Natural killer cell (primary cell): ENCODE measurements at regions of chr6 and their contacts with region 1.

Region 1: GRCh38 chr6:87472525-87473418 is at the start of gene SLC35A1:
- DNase-seq: peak; percentile 82 to 88
- ATAC-seq: peak; percentile 91 to 98 (median 94)
- H3K4me3 ChIP-seq: peak within 1 kb of the TSS; percentile 88
- H3K4me3 Mint-ChIP-seq: peak within 1 kb of the TSS; percentile 98
- H3K27ac ChIP-seq: peak within 1 kb of the TSS; percentile 93
- H3K27ac Mint-ChIP-seq: peak within 1 kb of the TSS; percentile 95 to 99
- H3K4me1 ChIP-seq: peaks cover 8% of the 10 kb centered on the region
- H3K4me1 Mint-ChIP-seq: peaks cover 9 to 16% of the 10 kb centered on the region in 2 donors
- H3K27me3 ChIP-seq: peaks cover 3% of the 10 kb centered on the region
- H3K27me3 Mint-ChIP-seq: peaks cover 10% of the 10 kb centered on the region in 2 donors
- CTCF ChIP-seq: no peak
- total RNA-seq, gene SLC35A1: 10.9 to 14.8 (median 13.4) TPM

Region 2: GRCh38 chr6:87154993-87155841 is 317.6 kb before region 1 on chr6 and contains the start of gene ZNF292:
- intact Hi-C with region 1: loop called (anchors 2 kb)
- DNase-seq: peak; percentile 88 to 97
- ATAC-seq: peak; percentile 66 to 88 (median 80)
- H3K4me3 ChIP-seq: peak within 1 kb of the TSS; percentile 85
- H3K4me3 Mint-ChIP-seq: peak within 1 kb of the TSS; percentile 91
- H3K27ac ChIP-seq: peak within 1 kb of the TSS; percentile 96
- H3K27ac Mint-ChIP-seq: peak within 1 kb of the TSS; percentile 97 to 99
- H3K4me1 ChIP-seq: peaks cover 30% of the 10 kb centered on the region
- H3K4me1 Mint-ChIP-seq: peaks cover 52 to 53% of the 10 kb centered on the region in 2 donors
- H3K27me3 ChIP-seq: no peaks in the 10 kb centered on the region
- H3K27me3 Mint-ChIP-seq: no peaks in the 10 kb centered on the region
- CTCF ChIP-seq: no peak
- total RNA-seq, gene ZNF292: 78.7 to 90.4 (median 89.4) TPM

Region 3: GRCh38 chr6:87322304-87323212 is 150.2 kb before region 1 on chr6 and contains the start of gene SMIM8:
- intact Hi-C with region 1: loop called (anchors 1 kb)
- DNase-seq: peak; percentile 83 to 88
- ATAC-seq: peak; percentile 99 to 100 (median 100)
- H3K4me3 ChIP-seq: peak within 1 kb of the TSS; percentile 89
- H3K4me3 Mint-ChIP-seq: peak within 1 kb of the TSS; percentile 99
- H3K27ac ChIP-seq: peak within 1 kb of the TSS; percentile 49
- H3K27ac Mint-ChIP-seq: peak within 1 kb of the TSS; percentile 85 to 92
- H3K4me1 ChIP-seq: peaks cover 6% of the 10 kb centered on the region
- H3K4me1 Mint-ChIP-seq: peaks cover 13 to 23% of the 10 kb centered on the region in 2 donors
- H3K27me3 ChIP-seq: no peaks in the 10 kb centered on the region
- H3K27me3 Mint-ChIP-seq: peaks cover 8 to 9% of the 10 kb centered on the region in 2 donors
- CTCF ChIP-seq: peak; percentile 100
- total RNA-seq, gene SMIM8: 8.0 to 11.1 (median 9.5) TPM

Region 4: GRCh38 chr6:87393022-87393622 is 79.7 kb before region 1 on chr6:
- intact Hi-C with region 1: loop called (anchors 1 kb)
- DNase-seq: peak; percentile 20 to 83
- ATAC-seq: peak; percentile 94 to 100 (median 100)
- H3K4me3 ChIP-seq: no peak overlapping the region
- H3K4me3 Mint-ChIP-seq: no peak overlapping the region
- H3K27ac ChIP-seq: no peak overlapping the region
- H3K27ac Mint-ChIP-seq: peak overlapping the region in 1 of 2 donors; percentile 45
- H3K4me1 ChIP-seq: no peaks in the 10 kb centered on the region
- H3K4me1 Mint-ChIP-seq: peaks cover 5% of the 10 kb centered on the region in 2 donors
- H3K27me3 ChIP-seq: no peaks in the 10 kb centered on the region
- H3K27me3 Mint-ChIP-seq: no peaks in the 10 kb centered on the region
- CTCF ChIP-seq: peak; percentile 72

Region 5: GRCh38 chr6:87407901-87408720 is 64.7 kb before region 1 on chr6 and contains the start of gene CFAP206:
- intact Hi-C with region 1: loop called (anchors 5 kb)
- DNase-seq: peak; percentile 76 to 93
- ATAC-seq: peak; percentile 79 to 93 (median 83)
- H3K4me3 ChIP-seq: peak within 1 kb of the TSS; percentile 55
- H3K4me3 Mint-ChIP-seq: peak within 1 kb of the TSS; percentile 91
- H3K27ac ChIP-seq: peak within 1 kb of the TSS; percentile 48
- H3K27ac Mint-ChIP-seq: peak within 1 kb of the TSS; percentile 78
- H3K4me1 ChIP-seq: peaks cover 12% of the 10 kb centered on the region
- H3K4me1 Mint-ChIP-seq: peaks cover 6 to 16% of the 10 kb centered on the region in 2 donors
- H3K27me3 ChIP-seq: peaks cover 10% of the 10 kb centered on the region
- H3K27me3 Mint-ChIP-seq: peaks cover 9 to 32% of the 10 kb centered on the region in 2 donors
- CTCF ChIP-seq: no peak
- total RNA-seq, gene CFAP206: not detected

Region 6: GRCh38 chr6:87589693-87590549 is 117.1 kb after region 1 on chr6 and contains the starts of genes ORC3 and RARS2:
- intact Hi-C with region 1: loop called (anchors 2 kb)
- DNase-seq: peak; percentile 93 to 96
- ATAC-seq: peak; percentile 98 to 100 (median 99)
- H3K4me3 ChIP-seq: peak within 1 kb of the TSS; percentile 80
- H3K4me3 Mint-ChIP-seq: peak within 1 kb of the TSS; percentile 88
- H3K27ac ChIP-seq: peak within 1 kb of the TSS; percentile 73
- H3K27ac Mint-ChIP-seq: peak within 1 kb of the TSS; percentile 85 to 90
- H3K4me1 ChIP-seq: peaks cover 16% of the 10 kb centered on the region
- H3K4me1 Mint-ChIP-seq: peaks cover 50 to 51% of the 10 kb centered on the region in 2 donors
- H3K27me3 ChIP-seq: no peaks in the 10 kb centered on the region
- H3K27me3 Mint-ChIP-seq: no peaks in the 10 kb centered on the region
- CTCF ChIP-seq: no peak
- total RNA-seq, gene ORC3: 13.1 to 13.4 (median 13.3) TPM
- total RNA-seq, gene RARS2: 21.8 to 26.5 (median 24.2) TPM

Region 7: GRCh38 chr6:87701676-87702588 is 229.2 kb after region 1 on chr6 and contains the start of gene AKIRIN2:
- intact Hi-C with region 1: loop called (anchors 1 kb)
- DNase-seq: peak; percentile 97 to 99
- ATAC-seq: peak; percentile 78 to 92 (median 83)
- H3K4me3 ChIP-seq: peak within 1 kb of the TSS; percentile 87
- H3K4me3 Mint-ChIP-seq: peak within 1 kb of the TSS; percentile 99
- H3K27ac ChIP-seq: peak within 1 kb of the TSS; percentile 97
- H3K27ac Mint-ChIP-seq: peak within 1 kb of the TSS; percentile 94 to 98
- H3K4me1 ChIP-seq: no peaks in the 10 kb centered on the region
- H3K4me1 Mint-ChIP-seq: peaks cover 51 to 54% of the 10 kb centered on the region in 2 donors
- H3K27me3 ChIP-seq: no peaks in the 10 kb centered on the region
- H3K27me3 Mint-ChIP-seq: no peaks in the 10 kb centered on the region
- CTCF ChIP-seq: no peak
- total RNA-seq, gene AKIRIN2: 102 to 156 (median 108) TPM